ENCODE measurements at regions of chr3 and their contacts with region 1.

Region 1: DNA sequence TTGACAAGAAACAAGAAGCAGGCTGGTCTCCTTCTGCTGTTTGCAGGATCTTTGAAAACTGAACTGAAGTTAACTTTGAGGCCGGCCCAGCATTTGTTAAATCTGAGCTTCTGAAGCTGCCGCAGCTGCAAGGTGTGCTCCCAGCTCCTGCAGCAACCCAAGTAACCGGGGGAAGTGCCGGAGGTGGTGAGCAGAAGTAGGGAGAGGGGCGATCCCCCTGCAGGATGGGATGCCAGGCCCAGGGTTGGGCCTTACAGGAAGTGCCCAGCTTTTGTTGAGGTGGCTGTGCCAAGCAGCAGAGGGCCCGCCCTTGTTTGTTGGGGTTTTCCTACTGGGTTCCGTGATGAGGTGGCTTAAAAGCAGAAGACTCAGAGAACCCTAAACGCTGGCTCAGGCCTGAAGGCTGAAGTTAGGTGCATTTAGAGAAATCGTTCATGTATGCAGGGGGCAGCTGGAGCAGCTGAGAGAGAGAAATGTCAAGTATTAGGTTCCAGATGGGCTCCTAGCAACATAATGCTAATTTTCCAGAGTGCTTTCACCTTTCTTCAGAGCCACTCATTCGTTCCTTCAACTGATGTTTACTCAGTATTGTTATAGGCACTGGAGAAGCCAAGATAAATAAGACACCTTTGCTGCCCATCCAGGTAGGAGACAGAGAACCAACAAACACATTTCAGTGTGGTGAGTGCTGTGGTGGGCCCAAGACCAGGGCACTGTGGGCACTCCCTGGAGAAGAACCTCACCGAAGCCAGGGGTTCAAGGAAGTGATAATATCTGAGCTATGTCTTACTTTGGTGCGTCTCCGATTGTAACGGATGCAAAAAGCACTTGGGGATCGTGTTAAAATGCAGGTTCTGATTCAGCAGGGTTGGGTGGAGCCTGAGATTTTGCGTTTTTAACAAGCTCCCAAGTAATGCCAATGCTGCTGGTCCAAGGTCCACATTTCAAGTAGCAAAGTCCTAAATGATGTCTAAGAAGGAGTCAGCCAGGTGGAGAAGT is 42.2 kb upstream of the PLCL2 start:
- DNase-seq: peak; percentile 91
- H3K4me3 Mint-ChIP-seq: peak overlapping the region; percentile 72
- H3K27ac Mint-ChIP-seq: peak overlapping the region; percentile 93
- H3K4me1 Mint-ChIP-seq: peaks cover 68% of the 10 kb centered on the region
- H3K27me3 Mint-ChIP-seq: no peaks in the 10 kb centered on the region

Region 2: DNA sequence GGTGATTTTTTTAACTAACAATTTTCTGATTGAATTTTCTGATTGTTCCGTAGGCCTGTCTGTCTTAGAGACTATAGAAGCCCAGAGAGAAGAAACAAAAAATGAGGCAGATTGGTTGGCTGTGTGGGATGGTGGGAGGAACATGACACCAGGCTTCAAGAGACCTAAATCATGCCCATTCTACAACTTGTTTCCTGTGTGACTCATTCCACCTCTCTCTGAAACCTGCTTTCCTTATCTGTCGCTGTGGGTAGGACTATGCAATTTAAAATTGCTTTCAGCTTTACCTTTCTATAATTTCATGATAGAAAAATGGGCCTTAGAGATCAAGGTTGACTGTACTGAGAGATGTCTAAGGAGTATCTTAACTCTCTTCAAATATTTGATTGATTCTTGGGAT is 533.0 kb before region 1 on chr3:
- CTCF ChIA-PET with region 1: no interaction called
- intact Hi-C with region 1: loop called (anchors 5 kb)
- DNase-seq: peak; percentile 76
- H3K4me3 Mint-ChIP-seq: peak overlapping the region; percentile 22
- H3K27ac Mint-ChIP-seq: peak overlapping the region; percentile 92
- H3K4me1 Mint-ChIP-seq: peaks cover 91% of the 10 kb centered on the region
- H3K27me3 Mint-ChIP-seq: no peaks in the 10 kb centered on the region

Region 3: DNA sequence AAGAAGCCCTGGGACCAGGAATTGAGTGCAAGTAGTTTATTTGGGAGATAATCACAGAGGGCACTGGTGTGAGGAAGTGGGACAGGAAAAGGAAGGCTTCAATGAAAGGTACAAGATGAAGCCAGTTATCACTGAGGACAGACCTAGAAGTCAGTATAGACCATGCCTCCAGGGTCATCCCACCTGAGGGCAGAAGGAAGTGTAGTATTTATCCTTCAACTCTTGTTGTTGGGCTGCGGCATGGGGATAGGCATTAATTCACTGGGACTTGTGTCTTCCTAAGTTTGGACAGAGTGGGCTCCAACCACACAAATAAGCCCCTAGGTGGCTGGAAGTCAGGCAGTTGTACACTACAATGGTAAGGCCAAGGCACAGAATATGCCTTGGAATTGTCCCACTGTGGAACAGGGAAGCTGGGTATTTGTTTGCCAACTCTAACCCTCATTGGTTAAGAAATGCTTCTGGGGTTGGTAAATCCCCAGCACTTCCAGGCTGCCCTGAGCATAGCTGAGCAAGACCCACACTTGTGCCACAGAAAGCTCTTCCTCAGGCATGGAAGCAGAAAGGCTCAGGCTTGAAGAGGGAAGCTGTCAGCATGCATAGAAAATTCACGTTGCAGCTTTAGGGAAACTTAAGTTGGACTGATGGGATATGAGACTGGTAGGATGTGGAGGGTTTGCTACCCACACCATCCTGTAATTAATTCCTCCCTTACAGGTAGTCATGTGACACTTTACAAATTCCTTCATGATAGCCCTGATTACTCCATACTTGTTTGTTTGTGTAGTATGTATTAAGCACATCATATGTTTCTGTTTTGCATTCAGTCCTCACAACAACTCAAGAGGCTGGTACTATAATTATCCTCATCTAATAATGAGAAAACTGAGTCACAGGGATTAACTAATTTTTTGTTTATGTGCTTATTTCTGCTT is 44.8 kb before region 1 on chr3:
- CTCF ChIA-PET with region 1: no interaction called
- intact Hi-C with region 1: loop called (anchors 1 kb)
- DNase-seq: no peak
- H3K4me3 Mint-ChIP-seq: no peak overlapping the region
- H3K27ac Mint-ChIP-seq: peak overlapping the region; percentile 77
- H3K4me1 Mint-ChIP-seq: peaks cover 38% of the 10 kb centered on the region
- H3K27me3 Mint-ChIP-seq: no peaks in the 10 kb centered on the region

Region 4: GRCh38 chr3:16932877-16933276 is 90.3 kb after region 1 on chr3:
- CTCF ChIA-PET with region 1: no interaction called
- intact Hi-C with region 1: loop called (anchors 5 kb)
- DNase-seq: no peak
- H3K4me3 Mint-ChIP-seq: peak overlapping the region; percentile 69
- H3K27ac Mint-ChIP-seq: peak overlapping the region; percentile 16
- H3K4me1 Mint-ChIP-seq: peaks cover 92% of the 10 kb centered on the region
- H3K27me3 Mint-ChIP-seq: no peaks in the 10 kb centered on the region

Region 5: DNA sequence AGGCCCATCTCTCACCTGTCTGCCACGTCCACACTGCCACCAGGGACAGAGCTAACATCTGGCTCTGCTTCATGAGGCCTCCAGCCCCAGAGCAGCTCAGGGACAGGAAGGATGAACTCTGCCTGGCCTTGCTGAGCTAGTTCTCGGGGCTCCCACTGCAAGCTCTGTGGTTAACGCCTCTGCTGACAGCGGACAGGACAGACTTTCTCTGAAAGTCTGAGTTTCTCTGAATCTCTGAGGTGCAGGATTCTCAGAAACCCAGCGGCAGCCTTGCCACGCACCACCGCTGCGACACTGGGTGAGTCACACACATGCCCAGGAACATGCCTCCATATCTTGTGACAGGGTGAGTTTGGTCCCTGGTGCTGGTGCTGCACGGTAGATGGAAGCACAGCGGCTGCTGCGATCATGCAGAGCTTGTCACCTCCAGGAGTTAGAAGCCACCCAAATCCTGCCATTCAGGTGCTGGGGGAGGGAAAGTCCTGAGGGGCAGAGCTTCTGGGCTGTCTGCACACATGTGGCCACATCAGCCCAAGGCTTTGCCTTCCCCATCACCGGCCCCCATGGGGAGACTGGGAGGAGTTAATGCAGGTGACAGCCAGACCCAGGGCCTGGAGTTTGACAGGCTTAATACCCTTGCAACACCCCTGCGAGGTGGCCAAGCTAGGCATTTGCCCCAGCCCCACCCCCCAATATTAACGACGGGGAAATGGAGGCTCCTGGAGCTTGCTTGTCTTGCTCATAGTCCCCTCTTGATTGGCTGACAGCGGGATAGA is 309.2 kb after region 1 on chr3:
- CTCF ChIA-PET with region 1: no interaction called
- intact Hi-C with region 1: loop called (anchors 2 kb)
- DNase-seq: peak; percentile 95
- H3K4me3 Mint-ChIP-seq: peak overlapping the region; percentile 28
- H3K27ac Mint-ChIP-seq: peak overlapping the region; percentile 85
- H3K4me1 Mint-ChIP-seq: peaks cover 25% of the 10 kb centered on the region
- H3K27me3 Mint-ChIP-seq: no peaks in the 10 kb centered on the region

Measured in activated naive CD4-positive, alpha-beta T cell treated with anti-CD3 and anti-CD28 coated beads for 36 hours (primary cell).